ENCODE measurements at regions of chr16 and their contacts with region 1.

Region 1: DNA sequence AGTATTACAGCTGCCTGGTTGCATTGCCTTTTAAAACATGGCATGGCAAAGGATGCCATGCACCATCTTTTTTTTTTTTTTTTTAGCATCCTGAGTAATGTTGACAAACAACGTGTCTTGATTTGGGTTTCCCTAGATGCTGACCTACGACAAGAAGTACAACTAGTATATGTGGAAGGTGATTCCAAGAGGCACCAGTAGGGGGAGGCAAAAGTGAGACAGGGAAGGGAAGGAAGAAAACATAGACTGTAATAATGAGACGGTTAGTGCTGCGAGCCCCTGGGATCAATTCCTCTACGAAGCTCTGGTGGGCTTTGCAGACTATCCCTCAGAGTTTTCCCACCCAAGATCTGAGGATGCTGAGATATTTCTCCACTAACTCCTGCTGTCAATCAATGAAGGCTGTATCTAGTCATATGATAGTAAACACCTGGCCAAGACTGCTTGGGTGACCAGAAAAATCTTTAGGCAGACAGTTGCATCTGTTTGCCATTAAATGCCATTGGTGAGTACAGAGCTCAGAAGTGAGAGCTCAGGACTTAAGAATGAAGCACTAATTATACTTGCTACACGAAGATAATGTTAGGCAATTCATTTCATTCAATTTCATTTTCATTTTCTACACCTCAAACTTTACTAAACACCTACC is 458.6 kb upstream of the GOT2 start:
- DNase-seq: peak; percentile 46
- H3K4me3 ChIP-seq: no peak overlapping the region
- H3K27ac ChIP-seq: no peak overlapping the region
- H3K4me1 ChIP-seq: peaks cover 6% of the 10 kb centered on the region
- H3K27me3 ChIP-seq: no peaks in the 10 kb centered on the region
- CTCF ChIP-seq: peak; percentile 50 to 54
- POLR2A ChIP-seq: no peak

Region 2: GRCh38 chr16:59173363-59173762 is 19.3 kb before region 1 on chr16:
- CTCF ChIA-PET with region 1: no interaction called
- POLR2A ChIA-PET with region 1: no interaction called
- dilution Hi-C with region 1: no loop called
- intact Hi-C with region 1: no loop called
- DNase-seq: no peak
- H3K4me3 ChIP-seq: no peak overlapping the region
- H3K27ac ChIP-seq: no peak overlapping the region
- H3K4me1 ChIP-seq: no peaks in the 10 kb centered on the region
- H3K27me3 ChIP-seq: peaks cover 0 to 3% of the 10 kb centered on the region in 2 experiments
- CTCF ChIP-seq: no peak
- POLR2A ChIP-seq: no peak

Region 3: GRCh38 chr16:59249011-59249410 is 56.3 kb after region 1 on chr16:
- CTCF ChIA-PET with region 1: interaction called, 6 read pairs
- POLR2A ChIA-PET with region 1: no interaction called
- dilution Hi-C with region 1: no loop called
- intact Hi-C with region 1: loop called (anchors 2 kb)
- DNase-seq: peak; percentile 9
- H3K4me3 ChIP-seq: no peak overlapping the region
- H3K27ac ChIP-seq: no peak overlapping the region
- H3K4me1 ChIP-seq: no peaks in the 10 kb centered on the region
- H3K27me3 ChIP-seq: no peaks in the 10 kb centered on the region
- CTCF ChIP-seq: no peak
- POLR2A ChIP-seq: no peak

Region 4: GRCh38 chr16:59478838-59479237 is 286.2 kb after region 1 on chr16:
- CTCF ChIA-PET with region 1: interaction called, 4 read pairs
- POLR2A ChIA-PET with region 1: no interaction called
- dilution Hi-C with region 1: no loop called
- intact Hi-C with region 1: loop called (anchors 5 kb)
- DNase-seq: peak; percentile 88
- H3K4me3 ChIP-seq: no peak overlapping the region
- H3K27ac ChIP-seq: peak overlapping the region; percentile 45
- H3K4me1 ChIP-seq: peaks cover 11% of the 10 kb centered on the region
- H3K27me3 ChIP-seq: no peaks in the 10 kb centered on the region
- CTCF ChIP-seq: no peak
- POLR2A ChIP-seq: no peak

Region 5: GRCh38 chr16:60203525-60204124 is 1011.0 kb after region 1 on chr16:
- CTCF ChIA-PET with region 1: no interaction called
- POLR2A ChIA-PET with region 1: no interaction called
- dilution Hi-C with region 1: no loop called
- intact Hi-C with region 1: loop called (anchors 10 kb)
- DNase-seq: peak; percentile 49
- H3K4me3 ChIP-seq: no peak overlapping the region
- H3K27ac ChIP-seq: no peak overlapping the region
- H3K4me1 ChIP-seq: no peaks in the 10 kb centered on the region
- H3K27me3 ChIP-seq: no peaks in the 10 kb centered on the region
- CTCF ChIP-seq: peak; percentile 30 to 45
- POLR2A ChIP-seq: no peak

Measured in endothelial cell of umbilical vein (primary cell).